ENCODE measurements at regions of chr3 and their contacts with region 1.

Region 1: GRCh38 chr3:134794950-134795745 is at the start of gene EPHB1:
- DNase-seq: peak; percentile 87
- ATAC-seq: peak; percentile 88
- H3K4me3 Mint-ChIP-seq: peak within 1 kb of the TSS; percentile 87
- H3K27ac Mint-ChIP-seq: no peak within 1 kb of the TSS
- H3K4me1 Mint-ChIP-seq: peaks cover 20% of the 10 kb centered on the region
- H3K27me3 Mint-ChIP-seq: peaks cover 52% of the 10 kb centered on the region
- total RNA-seq, gene EPHB1: 1.1 to 1.4 TPM

Region 2: GRCh38 chr3:133927540-133928066 is 867.5 kb before region 1 on chr3:
- CTCF ChIA-PET with region 1: no interaction called
- POLR2A ChIA-PET with region 1: no interaction called
- DNase-seq: peak; percentile 70
- ATAC-seq: peak; percentile 96
- H3K4me3 Mint-ChIP-seq: peak overlapping the region; percentile 60
- H3K27ac Mint-ChIP-seq: no peak overlapping the region
- H3K4me1 Mint-ChIP-seq: peaks cover 9% of the 10 kb centered on the region
- H3K27me3 Mint-ChIP-seq: peaks cover 21% of the 10 kb centered on the region

Region 3: GRCh38 chr3:134777341-134777740 is 17.8 kb before region 1 on chr3:
- CTCF ChIA-PET with region 1: interaction called, 10 read pairs
- POLR2A ChIA-PET with region 1: no interaction called
- DNase-seq: no peak
- ATAC-seq: peak; percentile 49
- H3K4me3 Mint-ChIP-seq: no peak overlapping the region
- H3K27ac Mint-ChIP-seq: peak overlapping the region; percentile 52
- H3K4me1 Mint-ChIP-seq: peaks cover 26% of the 10 kb centered on the region
- H3K27me3 Mint-ChIP-seq: peaks cover 25% of the 10 kb centered on the region

Region 4: GRCh38 chr3:136042608-136043221 is 1247.6 kb after region 1 on chr3:
- CTCF ChIA-PET with region 1: interaction called, 18 read pairs
- POLR2A ChIA-PET with region 1: no interaction called
- DNase-seq: no peak
- ATAC-seq: no peak
- H3K4me3 Mint-ChIP-seq: no peak overlapping the region
- H3K27ac Mint-ChIP-seq: no peak overlapping the region
- H3K4me1 Mint-ChIP-seq: no peaks in the 10 kb centered on the region
- H3K27me3 Mint-ChIP-seq: peaks cover 7% of the 10 kb centered on the region

Measured in activated CD8-positive, alpha-beta T cell treated with anti-CD3 and anti-CD28 coated beads, Interleukin-2, amount 10 ng/mL, durations not matched to agents 7 days and 5 days (primary cell).